ENCODE measurements at regions of chr14 and their contacts with region 1.

Region 1: DNA sequence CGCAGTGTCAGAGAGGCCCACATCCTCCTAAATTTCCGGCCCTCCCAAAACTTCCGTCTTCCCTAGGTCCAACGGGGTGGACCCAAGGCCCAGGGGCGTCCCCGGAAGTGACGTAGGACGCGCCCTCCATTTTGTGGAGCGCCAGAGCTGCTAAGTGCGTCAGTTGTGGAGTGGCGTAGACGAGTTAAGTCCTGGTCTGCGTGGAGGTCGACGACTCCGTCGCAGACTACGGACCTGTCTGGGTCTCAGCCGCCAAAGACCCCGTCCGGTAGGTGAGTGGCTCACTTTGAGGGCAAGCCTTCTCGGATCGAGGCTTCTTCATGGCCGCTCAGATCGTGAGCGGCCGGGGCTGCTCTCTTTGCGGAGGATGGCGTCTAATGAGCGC is at the start of gene SRSF5:
- DNase-seq: peak; percentile 96
- ATAC-seq: peak; percentile 76
- H3K4me3 Mint-ChIP-seq: peak within 1 kb of the TSS; percentile 96
- H3K27ac Mint-ChIP-seq: peak within 1 kb of the TSS; percentile 99
- H3K4me1 Mint-ChIP-seq: peaks cover 77% of the 10 kb centered on the region
- H3K27me3 Mint-ChIP-seq: no peaks in the 10 kb centered on the region
- total RNA-seq, gene SRSF5: 265 to 319 TPM

Region 2: DNA sequence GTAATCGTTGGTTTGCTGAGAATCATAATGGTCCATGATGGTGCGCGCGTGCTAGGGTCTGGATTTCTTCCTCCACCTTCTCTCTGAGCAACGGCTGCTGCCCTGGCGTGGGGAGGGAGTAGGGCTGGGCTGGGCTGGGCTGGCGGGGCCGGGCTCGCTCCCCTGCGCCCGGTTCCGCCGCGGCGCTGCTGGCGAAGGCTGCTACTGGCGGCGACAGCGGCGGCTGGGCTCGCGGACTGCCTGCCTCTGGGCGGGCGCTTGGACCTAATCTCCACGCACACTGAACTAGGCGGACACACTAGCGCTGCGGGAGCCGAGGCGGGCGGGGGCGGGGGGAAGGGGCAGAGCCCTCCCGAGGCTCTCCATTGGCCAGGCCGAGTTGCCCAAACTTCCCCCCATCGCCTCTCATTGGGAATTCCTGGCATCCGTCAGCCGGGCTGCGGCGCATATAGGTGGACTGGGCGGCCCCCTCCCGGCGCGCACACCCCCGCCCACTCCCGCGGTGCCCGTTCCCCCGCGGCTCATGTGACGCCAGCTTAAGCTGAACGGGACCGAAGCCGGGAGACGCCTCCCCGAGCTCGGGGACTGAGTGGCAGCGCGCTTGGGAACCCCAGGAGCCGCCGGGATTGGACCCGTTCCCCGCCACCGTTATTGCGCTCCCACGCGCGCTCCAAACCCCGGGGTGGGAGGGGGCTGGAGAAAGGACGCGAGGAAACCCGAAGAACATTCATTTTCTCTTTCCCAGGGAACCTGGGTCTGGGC is 787.8 kb before region 1 on chr14 and contains the start of gene ACTN1:
- CTCF ChIA-PET with region 1: no interaction called
- POLR2A ChIA-PET with region 1: no interaction called
- intact Hi-C with region 1: loop called in 1 of 2 experiments (anchors 5 kb)
- DNase-seq: peak; percentile 84
- ATAC-seq: peak; percentile 72
- H3K4me3 Mint-ChIP-seq: peak within 1 kb of the TSS; percentile 79
- H3K27ac Mint-ChIP-seq: peak within 1 kb of the TSS; percentile 88
- H3K4me1 Mint-ChIP-seq: peaks cover 38% of the 10 kb centered on the region
- H3K27me3 Mint-ChIP-seq: peaks cover 2% of the 10 kb centered on the region
- total RNA-seq, gene ACTN1: 92.8 to 146 TPM

Region 3: GRCh38 chr14:69191340-69192111 is 575.5 kb before region 1 on chr14 and contains the start of gene EXD2:
- CTCF ChIA-PET with region 1: no interaction called
- POLR2A ChIA-PET with region 1: no interaction called
- intact Hi-C with region 1: loop called in 1 of 2 experiments (anchors 5 kb)
- DNase-seq: peak; percentile 90
- ATAC-seq: peak; percentile 93
- H3K4me3 Mint-ChIP-seq: peak within 1 kb of the TSS; percentile 92
- H3K27ac Mint-ChIP-seq: peak within 1 kb of the TSS; percentile 91
- H3K4me1 Mint-ChIP-seq: peaks cover 25% of the 10 kb centered on the region
- H3K27me3 Mint-ChIP-seq: no peaks in the 10 kb centered on the region
- total RNA-seq, gene EXD2: 10.8 to 14.5 TPM

Region 4: DNA sequence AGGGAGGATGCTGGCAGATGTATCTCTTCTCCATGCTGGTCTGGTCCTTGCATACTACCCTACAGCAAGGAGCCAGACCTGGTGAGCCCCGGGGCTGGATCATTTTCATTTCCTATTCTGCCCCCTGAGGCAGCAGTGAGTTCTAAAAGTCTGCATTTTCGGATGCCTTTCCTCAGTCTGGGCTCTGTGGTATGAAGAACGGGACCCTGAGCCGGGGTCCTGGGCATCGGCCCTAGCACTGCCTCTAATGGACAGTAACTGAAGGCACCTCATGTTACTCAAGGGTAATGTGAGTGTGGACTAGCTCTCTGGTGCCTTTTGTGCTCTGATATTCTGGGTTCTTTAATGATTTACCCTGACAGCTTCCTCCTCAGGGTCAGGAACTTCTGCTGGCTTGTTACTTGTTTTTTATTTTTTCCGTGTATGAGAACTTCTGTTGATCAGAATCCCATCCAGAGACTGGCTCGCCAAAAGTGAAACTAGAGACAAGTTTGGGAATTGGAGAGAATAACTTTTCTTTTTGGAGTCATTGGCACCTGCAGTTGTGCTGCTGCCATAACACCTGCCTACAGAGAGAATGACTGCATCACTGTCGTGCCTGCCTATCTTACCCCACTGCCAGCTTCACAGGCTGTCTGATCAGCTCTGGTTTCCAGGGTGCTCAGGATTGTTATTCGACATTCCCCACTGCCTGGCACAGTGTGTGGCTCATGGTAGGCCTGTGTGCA is 93.2 kb before region 1 on chr14:
- CTCF ChIA-PET with region 1: no interaction called
- POLR2A ChIA-PET with region 1: interaction called, 3 read pairs
- intact Hi-C with region 1: loop called (anchors 2 kb)
- DNase-seq: peak; percentile 40
- ATAC-seq: no peak
- H3K4me3 Mint-ChIP-seq: peak overlapping the region; percentile 60
- H3K27ac Mint-ChIP-seq: peak overlapping the region; percentile 99
- H3K4me1 Mint-ChIP-seq: peaks cover 95% of the 10 kb centered on the region
- H3K27me3 Mint-ChIP-seq: no peaks in the 10 kb centered on the region

Region 5: GRCh38 chr14:69695322-69696203 is 71.4 kb before region 1 on chr14:
- CTCF ChIA-PET with region 1: no interaction called
- POLR2A ChIA-PET with region 1: no interaction called
- intact Hi-C with region 1: no loop called
- DNase-seq: no peak
- ATAC-seq: peak; percentile 23
- H3K4me3 Mint-ChIP-seq: no peak overlapping the region
- H3K27ac Mint-ChIP-seq: peak overlapping the region; percentile 69
- H3K4me1 Mint-ChIP-seq: peaks cover 87% of the 10 kb centered on the region
- H3K27me3 Mint-ChIP-seq: no peaks in the 10 kb centered on the region

Region 6: DNA sequence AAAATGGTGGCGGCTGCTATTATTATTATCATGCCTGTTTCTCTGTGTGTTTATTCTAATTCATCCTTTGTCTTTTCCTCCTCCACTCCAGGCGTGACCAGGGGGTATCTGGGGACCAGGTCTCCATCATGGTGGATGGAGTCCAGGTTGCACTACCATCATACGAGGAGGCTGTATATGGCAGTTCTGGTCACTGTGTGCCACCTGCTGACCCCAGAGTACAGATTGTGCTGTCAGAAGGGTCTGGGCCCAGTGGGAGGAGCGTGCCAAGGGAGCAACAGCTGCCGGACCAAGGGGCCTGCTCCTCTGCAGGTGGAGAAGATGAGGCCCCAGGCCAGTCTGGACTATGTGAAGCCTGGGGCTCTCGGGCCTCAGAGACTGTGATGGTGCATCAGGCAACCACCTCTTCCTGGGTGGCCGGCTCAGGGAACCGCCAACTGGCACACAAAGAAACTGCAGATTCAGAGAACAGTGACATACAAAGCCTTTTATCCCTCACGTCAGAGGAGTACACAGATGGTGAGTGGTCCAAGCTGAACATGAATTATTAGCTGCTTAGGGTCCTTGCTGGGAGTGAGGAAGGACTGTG is 58.3 kb before region 1 on chr14:
- CTCF ChIA-PET with region 1: no interaction called
- POLR2A ChIA-PET with region 1: no interaction called
- intact Hi-C with region 1: no loop called
- DNase-seq: peak; percentile 69
- ATAC-seq: peak; percentile 79
- H3K4me3 Mint-ChIP-seq: no peak overlapping the region
- H3K27ac Mint-ChIP-seq: no peak overlapping the region
- H3K4me1 Mint-ChIP-seq: peaks cover 35% of the 10 kb centered on the region
- H3K27me3 Mint-ChIP-seq: no peaks in the 10 kb centered on the region

Region 7: DNA sequence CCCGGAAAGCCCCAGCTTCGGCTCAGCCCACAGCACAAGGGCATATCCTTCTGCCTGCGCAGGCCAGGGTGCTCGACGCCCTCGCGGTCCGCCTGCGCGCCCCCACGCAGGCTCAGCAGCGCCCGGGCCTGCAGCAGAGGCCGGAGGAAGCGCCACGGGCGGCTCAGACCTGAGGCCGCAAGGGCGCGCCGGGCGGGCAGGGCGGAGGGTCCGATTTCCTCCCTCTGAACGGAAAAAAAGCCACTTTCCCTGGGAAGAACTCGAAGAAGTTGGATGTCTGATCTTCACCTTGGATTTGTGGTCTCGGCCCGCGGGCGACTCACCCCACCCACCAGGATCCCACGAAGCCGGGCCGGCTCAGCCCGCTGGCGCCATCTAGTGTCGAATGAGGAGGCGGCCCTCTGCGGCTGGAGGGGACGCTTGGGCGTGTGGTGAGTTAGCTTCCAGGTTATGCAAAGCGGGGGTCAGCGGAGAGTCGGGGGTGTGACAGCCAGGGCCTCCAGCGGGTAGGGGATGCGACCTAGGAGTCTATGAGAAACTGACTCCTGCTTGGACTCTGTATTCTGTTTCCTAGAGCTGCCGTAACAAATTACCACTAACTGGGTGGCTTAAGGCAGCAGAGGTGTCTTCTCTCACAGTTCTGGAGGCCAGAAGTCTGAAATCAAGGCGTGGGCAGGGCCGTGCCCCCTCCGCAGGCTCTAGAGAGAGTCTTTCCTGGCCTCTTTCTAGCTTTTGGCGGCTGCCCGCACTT is 40.0 kb before region 1 on chr14:
- CTCF ChIA-PET with region 1: interaction called, 3 read pairs
- POLR2A ChIA-PET with region 1: no interaction called
- intact Hi-C with region 1: loop called in 1 of 2 experiments (anchors 1 kb)
- DNase-seq: peak; percentile 90
- ATAC-seq: peak; percentile 91
- H3K4me3 Mint-ChIP-seq: peak overlapping the region; percentile 61
- H3K27ac Mint-ChIP-seq: peak overlapping the region; percentile 21
- H3K4me1 Mint-ChIP-seq: peaks cover 15% of the 10 kb centered on the region
- H3K27me3 Mint-ChIP-seq: peaks cover under 1% of the 10 kb centered on the region

Region 8: GRCh38 chr14:70640938-70641547 is 874.1 kb after region 1 on chr14:
- CTCF ChIA-PET with region 1: no interaction called
- POLR2A ChIA-PET with region 1: no interaction called
- intact Hi-C with region 1: loop called in 1 of 2 experiments (anchors 5 kb)
- DNase-seq: peak; percentile 79
- ATAC-seq: peak; percentile 80
- H3K4me3 Mint-ChIP-seq: peak overlapping the region; percentile 87
- H3K27ac Mint-ChIP-seq: peak overlapping the region; percentile 90
- H3K4me1 Mint-ChIP-seq: peaks cover 40% of the 10 kb centered on the region
- H3K27me3 Mint-ChIP-seq: no peaks in the 10 kb centered on the region

Region 9: GRCh38 chr14:70907176-70907995 is 1140.4 kb after region 1 on chr14 and contains the start of gene PCNX1:
- CTCF ChIA-PET with region 1: interaction called, 3 read pairs
- POLR2A ChIA-PET with region 1: no interaction called
- intact Hi-C with region 1: loop called in 1 of 2 experiments (anchors 2 kb)
- DNase-seq: peak; percentile 93
- ATAC-seq: peak; percentile 73
- H3K4me3 Mint-ChIP-seq: peak within 1 kb of the TSS; percentile 96
- H3K27ac Mint-ChIP-seq: peak within 1 kb of the TSS; percentile 94
- H3K4me1 Mint-ChIP-seq: peaks cover 70% of the 10 kb centered on the region
- H3K27me3 Mint-ChIP-seq: no peaks in the 10 kb centered on the region
- total RNA-seq, gene PCNX1: 38.4 to 57.9 TPM

Measured in activated CD4-positive, alpha-beta T cell treated with anti-CD3 and anti-CD28 coated beads for 36 hours (primary cell).